Heart left ventricle (tissue), 16 donors: ENCODE measurements at regions of chr11 and their contacts with region 1.

Region 1: DNA sequence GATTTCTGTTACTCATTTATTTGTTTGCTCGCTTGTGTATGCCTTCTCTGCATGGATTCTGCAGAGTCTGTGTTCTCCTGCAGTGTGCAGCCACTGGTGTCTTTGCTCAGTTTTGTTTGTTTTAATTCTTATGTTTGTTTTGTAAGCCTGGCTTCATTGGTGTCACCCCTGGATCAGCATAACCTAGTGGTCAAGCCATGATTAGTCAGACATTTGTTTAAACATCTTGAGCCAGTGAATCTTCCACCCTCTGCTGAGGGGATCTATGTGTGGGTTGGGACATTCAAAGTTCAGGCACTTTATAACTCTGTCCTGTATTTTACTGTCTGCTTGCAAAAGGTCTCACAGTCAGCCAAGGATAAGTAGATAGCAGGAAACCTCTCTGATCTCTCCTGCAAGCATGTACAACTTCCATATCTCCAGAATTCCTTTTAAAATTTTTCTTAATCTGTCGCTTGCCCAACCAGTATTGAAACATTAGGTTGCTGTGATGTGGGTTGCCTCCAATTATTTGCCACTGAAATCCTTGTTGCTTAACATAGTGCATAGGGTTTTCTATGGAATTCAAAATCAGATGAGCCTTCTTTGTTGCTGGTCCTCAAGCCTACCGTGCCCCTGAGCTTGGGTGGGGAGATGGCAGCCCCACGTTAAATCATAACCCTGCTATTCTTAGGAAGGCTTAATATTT is 86.8 kb downstream of the KCNQ1OT1 start:
- DNase-seq: no peak
- ATAC-seq: no peak
- H3K4me3 ChIP-seq: no peak overlapping the region
- H3K27ac ChIP-seq: no peak overlapping the region
- H3K4me1 ChIP-seq: no peaks in the 10 kb centered on the region
- H3K27me3 ChIP-seq: no peaks in the 10 kb centered on the region
- CTCF ChIP-seq: no peak
- POLR2A ChIP-seq: no peak

Region 2: GRCh38 chr11:2428322-2428795 is 184.7 kb before region 1 on chr11:
- intact Hi-C with region 1: no loop called
- DNase-seq: peak; percentile 67 to 89 (median 78)
- ATAC-seq: peak; percentile 73 to 91 (median 78)
- H3K4me3 ChIP-seq: no peak overlapping the region
- H3K27ac ChIP-seq: no peak overlapping the region
- H3K4me1 ChIP-seq: no peaks in the 10 kb centered on the region
- H3K27me3 ChIP-seq: no peaks in the 10 kb centered on the region
- CTCF ChIP-seq: peak; percentile 71 to 87 (median 84)
- POLR2A ChIP-seq: no peak

Region 3: DNA sequence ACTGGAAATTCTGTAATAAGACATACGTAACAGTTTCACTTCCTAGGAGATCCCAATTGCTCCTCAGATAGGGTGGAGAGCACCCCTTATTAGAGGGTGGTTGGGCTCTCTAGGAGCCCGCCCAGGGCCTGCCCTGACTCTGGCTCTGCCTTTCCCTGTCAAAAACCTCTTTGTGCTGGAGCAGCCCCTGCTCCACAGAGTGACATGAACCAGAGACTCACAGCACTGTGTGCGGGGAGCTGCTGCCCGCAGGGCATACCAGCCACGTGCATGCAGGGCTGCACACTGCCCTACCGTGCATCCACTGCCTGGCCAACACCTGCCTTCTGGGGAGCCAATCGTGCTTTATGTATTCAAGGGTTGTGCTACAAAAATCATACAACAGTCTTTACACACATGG is 62.5 kb after region 1 on chr11:
- intact Hi-C with region 1: loop called in 1 of 10 experiments (anchors 10 kb)
- DNase-seq: no peak
- ATAC-seq: peak in 3 of 4 donors; percentile 19 to 36 (median 25)
- H3K4me3 ChIP-seq: no peak overlapping the region
- H3K27ac ChIP-seq: peak overlapping the region in 1 of 12 donors; percentile 65
- H3K4me1 ChIP-seq: peaks cover 0 to 45% (median 24%) of the 10 kb centered on the region in 12 donors
- H3K27me3 ChIP-seq: no peaks in the 10 kb centered on the region
- CTCF ChIP-seq: no peak
- POLR2A ChIP-seq: no peak